GM18951 (cell line): ENCODE measurements at regions of chr4 and their contacts with region 1.

Region 1: DNA sequence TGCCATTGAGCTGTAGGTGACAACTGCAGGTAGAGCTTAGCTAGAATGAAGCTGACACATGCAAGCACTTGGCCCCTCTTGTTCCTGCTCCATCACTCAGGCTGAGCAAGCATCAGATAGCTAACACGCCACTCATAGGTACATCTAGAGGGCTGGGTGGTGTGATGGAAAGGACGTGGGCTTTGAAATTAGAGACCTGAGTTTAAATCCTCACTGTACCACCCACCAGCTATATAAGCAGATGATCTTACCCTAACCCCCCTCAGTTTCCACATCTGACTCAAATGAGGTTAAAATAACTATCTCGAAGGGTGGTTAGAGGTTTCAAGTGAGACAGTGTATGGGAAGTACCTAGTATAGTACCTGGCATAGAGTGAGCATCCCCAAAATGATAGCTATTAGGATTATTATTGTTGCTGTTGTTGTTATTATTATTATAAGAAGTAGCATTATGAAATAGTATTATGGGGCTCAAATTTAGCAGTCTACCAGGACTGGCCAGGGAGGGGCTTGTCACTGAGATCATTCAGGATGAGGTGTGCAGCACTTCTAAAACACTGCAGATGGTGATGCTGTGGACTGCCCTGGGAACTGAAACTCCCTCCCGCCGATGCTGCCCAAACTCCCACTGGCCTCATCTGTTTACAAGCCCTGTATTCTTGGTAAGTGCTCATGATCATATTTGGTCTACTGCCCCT is 59.0 kb downstream of the REELD1 start:
- POLR2A ChIP-seq: peak; percentile 43

Region 2: GRCh38 chr4:146333187-146333894 is 60.0 kb after region 1 on chr4:
- in situ Hi-C with region 1: loop called (anchors 10 kb)
- POLR2A ChIP-seq: no peak

Region 3: GRCh38 chr4:146359771-146360170 is 86.4 kb after region 1 on chr4:
- in situ Hi-C with region 1: no loop called
- POLR2A ChIP-seq: no peak

Region 4: DNA sequence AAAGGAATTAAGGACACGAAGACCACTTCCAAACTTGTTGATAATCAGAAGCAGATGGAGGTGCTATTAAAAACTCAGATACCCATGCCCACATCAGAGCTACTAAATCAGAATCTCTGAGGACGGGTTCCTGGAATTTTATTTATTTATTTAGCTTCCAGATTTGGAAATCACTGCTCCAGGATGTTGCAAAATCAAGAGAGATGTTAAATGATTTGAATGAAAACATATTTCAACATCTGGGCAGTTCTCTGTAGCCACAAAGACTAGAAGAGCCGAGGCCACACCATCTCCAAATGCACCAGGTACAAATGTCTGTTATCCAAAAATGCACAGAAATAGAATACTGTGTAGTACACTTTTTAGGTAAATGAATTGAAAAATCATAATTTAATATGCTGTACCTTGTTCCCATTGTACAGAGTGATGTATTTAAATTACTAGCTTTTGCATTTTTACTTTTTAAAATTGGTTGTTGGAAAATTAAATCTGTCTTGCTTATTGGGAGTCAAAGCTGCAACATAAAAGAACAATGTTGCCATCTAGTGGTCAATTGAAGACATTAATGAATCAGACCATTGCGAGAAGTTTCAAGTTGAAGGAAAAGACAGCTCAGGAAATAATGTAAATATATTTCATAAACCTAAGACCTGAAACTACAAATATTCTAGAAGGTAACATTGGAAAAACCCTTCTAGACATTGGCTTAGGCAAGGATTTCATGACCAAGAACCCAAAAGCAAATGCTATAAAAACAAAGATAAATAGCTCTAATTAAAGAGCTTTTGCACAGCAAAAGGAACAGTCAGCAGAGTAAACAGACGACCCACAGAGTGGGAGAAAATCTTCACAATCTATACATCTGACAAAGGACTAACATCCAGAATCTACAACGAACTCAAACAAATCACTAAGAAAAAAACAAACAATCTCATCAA is 823.6 kb after region 1 on chr4:
- in situ Hi-C with region 1: loop called (anchors 25 kb)
- POLR2A ChIP-seq: no peak